ENCODE measurements at regions of chr2 and their contacts with region 1.

Region 1: DNA sequence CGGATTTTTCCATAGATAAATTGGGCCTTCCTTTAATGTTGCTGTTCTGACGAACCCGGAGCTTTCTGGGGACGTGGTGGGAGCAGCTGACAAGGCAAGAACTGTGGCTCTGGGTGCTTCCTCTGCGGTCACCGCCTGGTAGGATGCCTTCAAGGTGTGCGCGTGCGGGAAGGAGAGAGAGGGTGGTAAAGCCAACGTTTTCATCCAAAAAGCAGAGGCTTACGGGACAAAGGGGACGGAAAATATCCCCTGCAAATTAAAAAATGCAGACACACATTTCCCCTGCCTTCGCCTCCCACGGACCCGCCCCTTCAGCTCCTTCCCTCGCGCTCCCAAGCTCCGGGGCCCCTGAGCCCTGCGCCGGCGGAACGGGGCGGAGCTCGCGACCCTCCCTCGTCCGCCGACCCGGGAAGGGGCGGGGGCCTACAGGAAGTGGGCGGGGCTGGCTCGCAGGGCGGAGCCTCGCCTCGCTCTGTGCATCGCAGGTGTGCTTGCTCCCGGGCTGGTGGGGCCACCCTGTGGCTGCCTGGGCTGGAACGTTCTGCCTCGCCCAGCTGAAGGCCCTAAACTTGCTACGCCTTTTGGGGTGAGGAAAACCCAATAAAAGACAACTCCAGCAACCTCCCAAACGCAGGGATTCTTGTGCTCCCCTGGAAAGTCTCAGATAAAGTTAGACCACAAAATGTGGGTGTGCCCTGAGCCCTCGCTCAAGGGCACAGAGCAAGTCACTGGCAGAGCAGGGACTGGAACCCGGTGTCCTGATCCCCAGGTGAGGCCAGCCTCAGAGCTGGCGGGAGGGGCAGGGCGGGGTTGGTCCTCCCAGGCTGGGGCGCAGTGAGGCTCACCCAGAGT is 25.4 kb upstream of the SLC66A3 start:
- DNase-seq: peak; percentile 96
- H3K4me3 ChIP-seq: peak overlapping the region in 1 of 2 experiments; percentile 29; a peak in 2 of 4 replicates
- H3K27ac ChIP-seq: peak overlapping the region in 1 of 2 experiments; percentile 3; a peak in 1 of 4 replicates
- H3K4me1 ChIP-seq: peaks cover 0 to 20% of the 10 kb centered on the region in 2 experiments; a peak in 1 of 4 replicates
- H3K27me3 ChIP-seq: no peaks in the 10 kb centered on the region
- CTCF ChIP-seq: no peak
- EP300 ChIP-seq: no peak
- RAD21 ChIP-seq: peak; percentile 68

Region 2: DNA sequence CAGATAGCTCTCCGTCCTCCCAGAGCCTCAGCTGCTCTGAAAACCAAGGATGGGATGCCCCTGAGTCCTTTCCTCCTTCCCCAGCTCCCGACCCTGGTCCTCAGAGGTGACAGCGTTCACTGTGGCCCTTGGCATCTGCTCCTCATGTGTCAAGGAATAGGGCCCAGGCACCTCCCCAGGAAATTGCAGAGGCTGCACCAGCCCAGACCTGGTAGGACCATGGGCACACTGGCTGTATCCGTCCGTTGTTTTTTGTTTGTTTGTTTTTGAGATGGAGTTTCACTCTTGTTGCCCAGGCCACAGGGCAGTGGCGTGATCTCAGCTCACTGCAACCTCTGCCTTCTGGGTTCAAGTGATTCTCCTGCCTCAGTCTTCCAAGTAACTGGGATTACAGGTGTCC is 12.0 kb before region 1 on chr2:
- CTCF ChIA-PET with region 1: interaction called, 54 read pairs
- POLR2A ChIA-PET with region 1: no interaction called
- DNase-seq: no peak
- H3K4me3 ChIP-seq: no peak overlapping the region
- H3K27ac ChIP-seq: no peak overlapping the region
- H3K4me1 ChIP-seq: no peaks in the 10 kb centered on the region
- H3K27me3 ChIP-seq: no peaks in the 10 kb centered on the region; the same call in 1 of the 2 replicates
- CTCF ChIP-seq: no peak
- EP300 ChIP-seq: no peak
- RAD21 ChIP-seq: no peak

Region 3: DNA sequence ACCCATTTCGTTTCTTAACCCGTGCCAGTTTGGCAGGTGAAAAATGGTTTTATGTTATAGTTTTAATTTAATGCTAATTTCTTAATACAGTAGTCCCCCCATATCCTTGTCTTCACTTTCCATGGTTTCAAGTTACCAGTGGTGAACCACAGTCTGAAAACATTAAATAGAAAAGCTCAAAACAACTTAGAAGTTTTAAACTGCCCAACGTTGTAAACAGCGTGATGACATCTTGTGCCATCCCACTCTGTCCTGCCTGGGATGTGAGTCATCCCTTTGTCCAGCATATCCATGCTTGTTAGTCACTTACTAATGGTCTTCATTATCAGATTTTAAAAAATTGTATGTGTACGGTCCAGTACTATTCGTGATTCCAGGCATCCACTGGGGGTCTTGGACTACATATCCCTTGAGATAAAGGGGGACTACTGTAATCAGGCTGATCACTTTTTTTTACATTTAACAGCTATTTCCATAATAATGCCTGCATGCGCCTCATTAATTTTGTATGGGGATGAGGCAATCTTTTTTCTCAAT is 57.3 kb after region 1 on chr2:
- CTCF ChIA-PET with region 1: interaction called, 15 read pairs
- POLR2A ChIA-PET with region 1: no interaction called
- DNase-seq: no peak
- H3K4me3 ChIP-seq: no peak overlapping the region
- H3K27ac ChIP-seq: peak overlapping the region in 1 of 2 experiments; percentile 57; a peak in 2 of 4 replicates
- H3K4me1 ChIP-seq: no peaks in the 10 kb centered on the region; a peak in 1 of 4 replicates
- H3K27me3 ChIP-seq: no peaks in the 10 kb centered on the region
- CTCF ChIP-seq: no peak
- EP300 ChIP-seq: no peak; a peak in 1 of 4 replicates
- RAD21 ChIP-seq: no peak

Region 4: DNA sequence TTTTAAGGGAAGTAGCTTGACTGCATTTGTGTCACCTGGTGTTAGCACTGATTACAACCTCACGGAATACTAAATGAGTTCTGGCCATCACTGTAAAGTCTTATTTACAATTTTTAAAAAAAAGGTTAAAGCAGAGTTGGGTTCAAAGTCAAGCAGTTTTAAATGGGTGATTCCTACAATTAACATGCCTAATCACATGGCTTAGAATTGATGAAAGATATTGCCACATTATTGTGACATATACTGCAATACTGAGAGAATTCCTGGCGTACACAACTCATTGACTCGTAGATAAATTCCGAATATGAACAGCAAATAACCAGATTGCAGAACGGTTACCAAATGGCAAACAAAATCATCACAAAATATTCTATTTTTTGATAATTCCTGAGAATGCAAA is 180.4 kb after region 1 on chr2:
- CTCF ChIA-PET with region 1: interaction called, 11 read pairs
- POLR2A ChIA-PET with region 1: no interaction called
- DNase-seq: no peak
- H3K4me3 ChIP-seq: no peak overlapping the region
- H3K27ac ChIP-seq: no peak overlapping the region
- H3K4me1 ChIP-seq: peaks cover 17 to 43% of the 10 kb centered on the region in 2 experiments; a peak in 3 of 4 replicates
- H3K27me3 ChIP-seq: no peaks in the 10 kb centered on the region
- CTCF ChIP-seq: no peak
- EP300 ChIP-seq: no peak
- RAD21 ChIP-seq: no peak

Region 5: GRCh38 chr2:11411768-11412448 is 282.1 kb after region 1 on chr2:
- CTCF ChIA-PET with region 1: interaction called, 294 read pairs
- POLR2A ChIA-PET with region 1: interaction called, 5 read pairs
- DNase-seq: peak; percentile 85
- H3K4me3 ChIP-seq: peak overlapping the region; percentile 46 to 49
- H3K27ac ChIP-seq: no peak overlapping the region
- H3K4me1 ChIP-seq: peaks cover 0 to 9% of the 10 kb centered on the region in 2 experiments; a peak in 1 of 4 replicates
- H3K27me3 ChIP-seq: no peaks in the 10 kb centered on the region
- CTCF ChIP-seq: peak; percentile 96
- EP300 ChIP-seq: no peak
- RAD21 ChIP-seq: peak; percentile 97

Region 6: DNA sequence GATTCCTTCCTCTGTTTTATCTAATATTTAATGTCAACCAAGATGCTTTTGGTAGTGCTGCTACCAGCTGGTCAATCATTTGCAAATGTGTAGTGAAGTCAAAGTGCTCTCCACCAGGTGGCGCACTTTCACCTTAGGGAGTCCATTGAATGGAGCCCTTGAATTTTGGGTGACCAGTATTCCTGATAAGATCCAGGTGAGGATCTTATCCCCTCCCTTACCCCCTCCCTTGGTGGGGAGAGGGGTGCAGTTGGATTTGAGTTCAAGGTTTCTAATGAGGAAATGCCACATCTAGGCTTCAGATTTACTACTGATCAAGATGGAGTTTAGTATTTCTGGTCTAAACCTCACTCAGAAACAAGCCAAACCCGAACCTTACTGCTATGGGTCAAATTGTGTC is 348.2 kb after region 1 on chr2:
- CTCF ChIA-PET with region 1: interaction called, 30 read pairs
- POLR2A ChIA-PET with region 1: no interaction called
- DNase-seq: peak; percentile 74
- H3K4me3 ChIP-seq: no peak overlapping the region; a peak in 1 of 4 replicates
- H3K27ac ChIP-seq: no peak overlapping the region
- H3K4me1 ChIP-seq: peaks cover 0 to 3% of the 10 kb centered on the region in 2 experiments; a peak in 1 of 4 replicates
- H3K27me3 ChIP-seq: peaks cover 12% of the 10 kb centered on the region; the same call in 1 of the 2 replicates
- CTCF ChIP-seq: peak; percentile 99
- EP300 ChIP-seq: 0 out of 4 replicates have a peak, but pooled peaks of 1 of the 2 experiments have one; percentile 12
- RAD21 ChIP-seq: peak; percentile 93

Measured in SK-N-SH (cell line).